BJ (cell line): ENCODE measurements at regions of chr16 and their contacts with region 1.

Region 1: GRCh38 chr16:11379420-11379819 is 34.2 kb downstream of the RMI2 start:
- DNase-seq: no peak
- H3K4me3 ChIP-seq: no peak overlapping the region
- H3K27me3 ChIP-seq: no peaks in the 10 kb centered on the region
- CTCF ChIP-seq: no peak

Region 2: GRCh38 chr16:11629963-11630767 is 250.7 kb after region 1 on chr16:
- CTCF ChIA-PET with region 1: no interaction called
- POLR2A ChIA-PET with region 1: interaction called, 13 read pairs
- DNase-seq: no peak
- H3K4me3 ChIP-seq: no peak overlapping the region
- H3K27me3 ChIP-seq: no peaks in the 10 kb centered on the region
- CTCF ChIP-seq: no peak

Region 3: DNA sequence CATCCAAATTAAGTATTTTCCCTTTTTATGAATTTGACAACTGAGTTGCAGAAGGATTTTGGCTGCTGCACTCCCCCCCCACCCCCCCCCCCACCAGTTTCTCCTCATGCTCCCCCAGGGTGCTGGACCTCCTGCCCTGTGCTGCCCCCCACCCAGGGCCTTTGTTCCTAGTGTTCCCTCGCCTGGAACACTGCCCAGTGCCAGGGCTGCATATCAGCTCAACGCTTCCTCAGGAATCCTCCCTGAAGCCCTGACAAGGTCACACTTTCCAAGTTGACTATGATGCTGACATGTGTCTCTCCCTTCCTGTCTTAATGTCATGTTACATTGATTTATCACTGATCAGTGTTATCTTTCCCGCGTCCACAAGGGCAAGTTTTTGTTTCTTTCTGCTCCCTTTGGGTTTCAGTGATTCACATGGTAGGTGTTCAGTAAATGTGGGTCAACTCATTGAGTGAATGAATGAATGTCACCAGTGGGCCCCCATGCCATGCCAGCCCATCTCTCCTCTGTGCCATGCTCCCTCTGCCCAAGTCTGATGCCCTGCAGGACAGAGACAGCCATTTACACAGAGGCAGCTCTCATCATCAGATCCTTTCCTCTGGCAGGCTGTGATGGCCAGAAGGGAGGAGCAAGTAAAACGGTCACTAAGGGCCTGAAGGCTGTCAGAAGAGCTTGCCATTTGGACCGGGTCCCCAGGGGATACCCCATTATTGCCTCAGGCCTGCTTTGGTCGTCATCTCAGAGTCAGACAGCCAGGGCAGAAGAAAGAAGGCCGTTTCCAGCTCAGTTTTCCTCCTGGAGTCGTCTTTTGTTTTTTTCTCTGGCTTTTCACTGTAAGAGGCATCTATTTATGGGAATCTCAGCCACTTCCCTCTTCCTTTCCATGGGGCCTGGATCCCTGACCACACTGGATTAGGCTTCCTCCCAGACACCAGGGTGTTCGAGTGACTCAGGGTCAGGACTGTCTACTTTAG is 983.4 kb after region 1 on chr16:
- CTCF ChIA-PET with region 1: no interaction called
- POLR2A ChIA-PET with region 1: no interaction called
- DNase-seq: no peak
- H3K4me3 ChIP-seq: no peak overlapping the region
- H3K27me3 ChIP-seq: no peaks in the 10 kb centered on the region
- CTCF ChIP-seq: no peak